CD4-positive, alpha-beta T cell (primary cell): ENCODE measurements at regions of chr1 and their contacts with region 1.

Region 1: DNA sequence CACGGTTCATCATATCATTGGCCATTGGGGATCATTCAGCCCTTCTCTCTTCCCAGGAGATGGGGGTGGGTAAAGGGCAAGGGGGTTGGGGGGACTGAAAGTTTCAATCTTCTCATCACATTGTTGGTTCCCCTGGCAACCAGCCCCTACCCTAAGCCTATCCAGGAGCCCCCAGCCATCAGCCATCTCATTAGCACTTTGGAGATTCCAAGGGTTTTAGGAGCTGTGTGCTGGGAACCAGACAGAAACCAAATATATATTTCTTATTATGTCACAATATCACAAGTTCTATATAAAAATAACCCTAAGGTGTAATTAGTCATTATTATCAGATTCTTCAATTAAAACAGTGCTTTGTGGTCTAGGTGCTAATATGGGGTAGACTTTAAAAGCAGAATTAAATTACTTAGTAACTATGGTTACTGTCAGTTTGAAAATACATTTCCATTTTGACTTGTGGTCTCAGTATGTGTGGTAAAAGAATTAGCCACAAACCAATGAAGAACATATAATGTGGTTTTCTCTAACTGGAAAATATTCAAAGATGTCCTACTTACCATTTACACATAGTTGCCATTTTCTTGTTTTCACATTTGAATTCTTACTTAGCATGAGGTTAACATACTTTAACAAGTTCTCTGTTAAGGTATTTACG is 28.1 kb downstream of the IL23R start:
- DNase-seq: peak in 3 of 14 experiments; percentile 65 to 74 (median 73)
- ATAC-seq: peak; percentile 68
- H3K4me3 ChIP-seq: no peak overlapping the region
- H3K4me3 Mint-ChIP-seq: peak overlapping the region; percentile 45
- H3K27ac ChIP-seq: no peak overlapping the region
- H3K27ac Mint-ChIP-seq: peak overlapping the region; percentile 50
- H3K4me1 ChIP-seq: peaks cover 20% of the 10 kb centered on the region
- H3K4me1 Mint-ChIP-seq: peaks cover 22% of the 10 kb centered on the region
- H3K27me3 ChIP-seq: no peaks in the 10 kb centered on the region
- H3K27me3 Mint-ChIP-seq: no peaks in the 10 kb centered on the region
- CTCF ChIP-seq: no peak

Region 2: DNA sequence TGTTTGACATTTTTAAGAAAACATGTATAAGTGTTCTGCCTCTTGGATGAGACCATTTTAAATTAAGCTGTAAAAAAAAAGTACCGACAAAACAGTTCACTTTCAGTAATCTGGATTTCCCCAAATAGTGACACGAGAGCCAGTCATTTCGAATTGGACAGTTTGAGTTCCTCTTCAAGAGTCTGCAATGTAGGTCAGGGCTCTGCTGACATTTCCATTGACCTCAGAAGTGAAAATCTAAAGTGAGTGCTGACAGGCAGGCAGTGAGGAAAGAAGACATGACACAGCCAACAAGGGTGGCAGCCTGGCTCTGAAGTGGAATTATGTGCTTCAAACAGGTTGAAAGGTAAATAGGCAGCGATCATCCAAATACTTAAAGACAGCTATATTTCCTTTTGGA is 28.1 kb before region 1 on chr1 and contains the start of gene IL23R:
- CTCF ChIA-PET with region 1: no interaction called
- POLR2A ChIA-PET with region 1: interaction called, 5 read pairs
- intact Hi-C with region 1: loop called (anchors 2 kb)
- DNase-seq: peak in 5 of 14 experiments; percentile 2 to 79 (median 49)
- ATAC-seq: peak; percentile 43
- H3K4me3 ChIP-seq: peak within 1 kb of the TSS; percentile 32
- H3K4me3 Mint-ChIP-seq: peak within 1 kb of the TSS; percentile 42
- H3K27ac ChIP-seq: no peak within 1 kb of the TSS
- H3K27ac Mint-ChIP-seq: peak within 1 kb of the TSS; percentile 11
- H3K4me1 ChIP-seq: peaks cover 16% of the 10 kb centered on the region
- H3K4me1 Mint-ChIP-seq: peaks cover 36% of the 10 kb centered on the region
- H3K27me3 ChIP-seq: peaks cover 0 to 3% of the 10 kb centered on the region in 2 experiments
- H3K27me3 Mint-ChIP-seq: peaks cover 6% of the 10 kb centered on the region
- CTCF ChIP-seq: no peak
- total RNA-seq, gene IL23R: 0.08 to 0.14 TPM

Region 3: DNA sequence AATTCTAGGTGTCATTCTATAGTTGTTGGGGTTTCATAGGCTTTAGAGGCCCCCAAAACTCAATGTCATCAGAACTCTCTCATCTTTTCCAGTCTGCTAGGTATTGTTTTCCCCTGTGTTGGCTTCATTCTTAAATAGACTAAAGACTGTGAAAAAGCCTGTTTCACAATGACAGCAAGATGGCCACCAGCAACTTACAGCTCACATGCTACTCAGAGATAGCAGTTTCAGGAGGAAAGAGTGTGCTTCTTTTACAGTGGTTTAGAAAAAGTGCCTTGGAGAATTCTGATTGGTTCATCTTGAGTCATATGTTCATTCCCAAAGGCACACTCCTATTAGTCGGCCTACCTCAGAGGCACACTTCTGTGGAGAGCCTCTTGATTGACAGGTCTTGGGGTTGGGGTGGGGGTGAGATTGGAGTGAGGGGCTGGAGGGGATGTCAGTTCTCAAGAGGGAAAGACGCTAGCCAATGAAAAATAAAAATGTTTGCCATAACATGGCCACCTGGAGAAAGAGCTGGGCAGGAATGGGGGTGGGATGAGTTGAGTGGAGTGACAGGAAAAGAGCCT is 19.5 kb before region 1 on chr1:
- CTCF ChIA-PET with region 1: no interaction called
- POLR2A ChIA-PET with region 1: interaction called, 5 read pairs
- intact Hi-C with region 1: loop called in 1 of 2 experiments (anchors 2 kb)
- DNase-seq: no peak
- ATAC-seq: no peak
- H3K4me3 ChIP-seq: no peak overlapping the region
- H3K4me3 Mint-ChIP-seq: no peak overlapping the region
- H3K27ac ChIP-seq: no peak overlapping the region
- H3K27ac Mint-ChIP-seq: no peak overlapping the region
- H3K4me1 ChIP-seq: peaks cover 13% of the 10 kb centered on the region
- H3K4me1 Mint-ChIP-seq: peaks cover 58% of the 10 kb centered on the region
- H3K27me3 ChIP-seq: no peaks in the 10 kb centered on the region
- H3K27me3 Mint-ChIP-seq: no peaks in the 10 kb centered on the region
- CTCF ChIP-seq: no peak